GM13977 (cell line): ENCODE measurements at regions of chr15 and their contacts with region 1.

Region 1: GRCh38 chr15:48861813-48862431 is 16.0 kb upstream of the EID1 start:
- DNase-seq: peak; percentile 49
- CTCF ChIP-seq: peak; percentile 74

Region 2: GRCh38 chr15:49225613-49226281 is 363.8 kb after region 1 on chr15:
- in situ Hi-C with region 1: loop called (anchors 10 kb)
- DNase-seq: no peak
- CTCF ChIP-seq: peak; percentile 31

Region 3: GRCh38 chr15:49421991-49422390 is 560.1 kb after region 1 on chr15:
- in situ Hi-C with region 1: loop called (anchors 25 kb)
- DNase-seq: peak; percentile 14
- CTCF ChIP-seq: peak; percentile 64

Region 4: GRCh38 chr15:50145451-50145872 is 1283.5 kb after region 1 on chr15:
- in situ Hi-C with region 1: loop called (anchors 25 kb)
- DNase-seq: no peak
- CTCF ChIP-seq: peak; percentile 33